Panc1 (cell line): ENCODE measurements at regions of chrX and their contacts with region 1.

Region 1: GRCh38 chrX:2954541-2954940 is 25.4 kb upstream of the ARSD start:
- DNase-seq: no peak
- ATAC-seq: no peak
- H3K4me3 ChIP-seq: no peak overlapping the region
- H3K27ac ChIP-seq: no peak overlapping the region
- H3K4me1 ChIP-seq: no peaks in the 10 kb centered on the region
- H3K27me3 ChIP-seq: no peaks in the 10 kb centered on the region
- CTCF ChIP-seq: no peak

Region 2: DNA sequence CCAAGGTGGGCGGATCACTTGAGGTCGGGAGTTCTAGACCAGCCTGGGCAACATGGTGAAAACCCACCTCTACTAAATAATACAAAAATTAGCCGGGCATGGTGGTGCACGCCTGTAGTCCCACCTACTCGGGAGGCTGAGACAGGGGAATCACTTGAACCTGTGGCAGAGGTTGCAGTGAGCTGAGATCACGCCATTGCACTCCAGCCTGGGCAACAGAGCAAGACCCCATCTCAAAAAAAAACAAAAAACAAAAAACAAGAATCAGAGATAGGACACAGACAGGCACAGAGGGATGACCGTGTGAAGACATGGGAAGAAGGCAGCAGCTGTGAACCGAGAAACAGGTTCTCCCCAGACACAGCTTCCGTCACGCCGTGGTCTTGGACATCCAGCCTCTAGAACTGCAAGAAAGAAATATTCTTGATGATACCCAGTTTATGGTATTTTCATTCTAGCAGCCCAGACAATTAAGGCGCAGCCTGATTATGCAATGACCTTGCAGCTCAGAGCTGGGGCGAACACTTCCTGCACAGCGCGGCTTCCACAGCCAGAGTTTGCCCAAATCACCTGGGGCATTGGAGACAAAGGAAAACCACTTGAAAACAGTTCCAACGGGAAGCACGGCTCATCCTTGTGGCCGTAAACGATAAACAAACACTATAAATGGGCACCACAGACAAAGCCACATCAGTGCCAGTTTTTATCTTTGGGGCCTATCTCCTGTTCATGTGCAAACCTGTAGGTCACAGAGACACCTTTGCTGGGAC is 21.2 kb before region 1 on chrX:
- CTCF ChIA-PET with region 1: interaction called, 12 read pairs
- POLR2A ChIA-PET with region 1: no interaction called
- in situ Hi-C with region 1: no loop called
- intact Hi-C with region 1: no loop called
- DNase-seq: no peak
- ATAC-seq: no peak
- H3K4me3 ChIP-seq: no peak overlapping the region
- H3K27ac ChIP-seq: no peak overlapping the region
- H3K4me1 ChIP-seq: no peaks in the 10 kb centered on the region
- H3K27me3 ChIP-seq: no peaks in the 10 kb centered on the region
- CTCF ChIP-seq: no peak